ENCODE measurements at regions of chr6 and their contacts with region 1.

Region 1: DNA sequence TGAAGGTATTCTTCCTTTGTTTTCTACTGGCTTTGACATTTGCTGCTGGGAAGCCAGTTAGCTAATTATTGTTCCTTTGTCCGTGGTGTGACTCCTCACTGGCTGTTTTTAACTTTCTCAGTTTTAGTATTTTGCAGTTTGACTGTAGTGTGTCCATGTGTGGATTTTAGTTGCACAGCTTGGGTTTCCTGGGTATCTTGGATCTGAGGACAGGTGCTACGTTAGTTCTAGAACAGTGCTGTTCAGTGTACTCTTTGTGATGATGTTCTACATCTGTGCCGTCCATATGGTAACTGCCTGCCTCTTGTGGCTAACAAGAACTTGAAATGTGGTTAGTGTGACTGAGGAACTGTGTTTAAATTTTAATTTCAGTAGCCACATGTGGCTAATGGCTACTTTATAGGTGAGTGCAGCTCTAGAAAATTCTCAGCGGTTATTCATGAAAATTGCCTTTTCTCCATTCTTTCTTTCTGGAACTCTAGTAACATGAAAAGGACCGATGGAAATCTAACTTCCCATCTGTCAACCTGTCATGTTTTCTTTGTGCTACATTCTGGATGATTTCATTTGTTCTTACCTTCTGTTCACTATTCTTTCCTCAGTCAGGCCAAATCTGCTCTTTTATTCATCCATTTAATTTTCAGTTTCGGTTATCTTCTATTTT is 7.4 kb downstream of the SNX9 start:
- DNase-seq: no peak
- H3K4me3 Mint-ChIP-seq: no peak overlapping the region
- H3K27ac Mint-ChIP-seq: no peak overlapping the region
- H3K4me1 Mint-ChIP-seq: peaks cover 40% of the 10 kb centered on the region
- H3K27me3 Mint-ChIP-seq: peaks cover 2% of the 10 kb centered on the region

Region 2: GRCh38 chr6:158460602-158461169 is 630.2 kb after region 1 on chr6:
- CTCF ChIA-PET with region 1: no interaction called
- POLR2A ChIA-PET with region 1: interaction called, 14 read pairs
- DNase-seq: no peak
- H3K4me3 Mint-ChIP-seq: no peak overlapping the region
- H3K27ac Mint-ChIP-seq: no peak overlapping the region
- H3K4me1 Mint-ChIP-seq: peaks cover 5% of the 10 kb centered on the region
- H3K27me3 Mint-ChIP-seq: no peaks in the 10 kb centered on the region